Lower leg skin (tissue), 4 donors: ENCODE measurements at regions of chrX and their contacts with region 1.

Region 1: GRCh38 chrX:150772150-150772970 is 79.2 kb downstream of the MTMR1 start:
- DNase-seq: peak; percentile 52 to 94
- H3K4me3 ChIP-seq: no peak overlapping the region
- CTCF ChIP-seq: peak in 1 of 3 donors; percentile 40
- POLR2A ChIP-seq: no peak

Region 2: DNA sequence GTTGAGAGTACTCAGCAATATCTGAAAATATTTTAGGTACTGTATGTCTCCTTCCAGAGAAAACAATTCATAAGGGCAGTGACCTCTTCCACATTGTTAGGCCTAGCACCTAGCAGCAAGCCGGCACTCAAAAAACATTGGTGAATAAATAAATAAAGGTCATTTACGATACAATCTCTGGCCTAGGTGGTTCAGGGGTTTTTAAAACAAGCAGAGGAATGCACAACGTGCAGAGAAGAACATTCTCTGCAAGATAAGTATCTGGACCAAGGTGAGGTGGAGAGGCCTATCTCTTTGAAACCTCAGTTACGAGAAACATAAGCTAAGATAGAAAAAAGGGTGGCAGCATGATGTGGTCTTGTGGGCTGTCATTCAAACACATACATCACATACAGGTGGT is 54.6 kb after region 1 on chrX:
- intact Hi-C with region 1: no loop called
- DNase-seq: no peak
- H3K4me3 ChIP-seq: no peak overlapping the region
- CTCF ChIP-seq: no peak
- POLR2A ChIP-seq: no peak

Region 3: GRCh38 chrX:151082076-151082948 is 310.0 kb after region 1 on chrX:
- intact Hi-C with region 1: loop called (anchors 5 kb)
- DNase-seq: peak; percentile 19 to 90
- H3K4me3 ChIP-seq: no peak overlapping the region
- CTCF ChIP-seq: no peak
- POLR2A ChIP-seq: no peak